Right ventricle myocardium inferior (tissue), 1 donor: ENCODE measurements at regions of chr9 and their contacts with region 1.

Region 1: GRCh38 chr9:93962561-93963440 is 7.6 kb upstream of the BARX1 start:
- DNase-seq: peak; percentile 85
- ATAC-seq: peak; percentile 83

Region 2: GRCh38 chr9:93713716-93714115 is 249.1 kb before region 1 on chr9:
- intact Hi-C with region 1: no loop called
- DNase-seq: no peak
- ATAC-seq: no peak

Region 3: DNA sequence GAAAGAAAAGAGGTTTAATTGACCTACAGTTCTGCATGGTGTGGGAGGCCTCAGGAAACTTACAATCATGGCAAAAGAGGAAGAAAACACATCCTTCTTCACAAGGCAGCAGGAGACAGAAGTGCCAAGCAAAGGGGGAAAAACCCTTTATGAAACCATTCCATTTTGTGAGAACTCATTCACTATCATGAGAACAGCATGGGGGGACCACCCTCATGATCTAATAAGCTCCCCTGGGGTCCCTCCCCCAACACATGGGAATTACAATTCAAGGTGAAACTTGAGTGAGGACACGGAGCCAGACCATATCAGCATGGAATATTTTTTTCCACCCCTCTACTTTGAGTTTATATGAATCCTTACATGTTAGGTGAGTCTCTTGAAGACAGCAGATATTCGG is 212.8 kb before region 1 on chr9:
- intact Hi-C with region 1: no loop called
- DNase-seq: no peak
- ATAC-seq: no peak

Region 4: DNA sequence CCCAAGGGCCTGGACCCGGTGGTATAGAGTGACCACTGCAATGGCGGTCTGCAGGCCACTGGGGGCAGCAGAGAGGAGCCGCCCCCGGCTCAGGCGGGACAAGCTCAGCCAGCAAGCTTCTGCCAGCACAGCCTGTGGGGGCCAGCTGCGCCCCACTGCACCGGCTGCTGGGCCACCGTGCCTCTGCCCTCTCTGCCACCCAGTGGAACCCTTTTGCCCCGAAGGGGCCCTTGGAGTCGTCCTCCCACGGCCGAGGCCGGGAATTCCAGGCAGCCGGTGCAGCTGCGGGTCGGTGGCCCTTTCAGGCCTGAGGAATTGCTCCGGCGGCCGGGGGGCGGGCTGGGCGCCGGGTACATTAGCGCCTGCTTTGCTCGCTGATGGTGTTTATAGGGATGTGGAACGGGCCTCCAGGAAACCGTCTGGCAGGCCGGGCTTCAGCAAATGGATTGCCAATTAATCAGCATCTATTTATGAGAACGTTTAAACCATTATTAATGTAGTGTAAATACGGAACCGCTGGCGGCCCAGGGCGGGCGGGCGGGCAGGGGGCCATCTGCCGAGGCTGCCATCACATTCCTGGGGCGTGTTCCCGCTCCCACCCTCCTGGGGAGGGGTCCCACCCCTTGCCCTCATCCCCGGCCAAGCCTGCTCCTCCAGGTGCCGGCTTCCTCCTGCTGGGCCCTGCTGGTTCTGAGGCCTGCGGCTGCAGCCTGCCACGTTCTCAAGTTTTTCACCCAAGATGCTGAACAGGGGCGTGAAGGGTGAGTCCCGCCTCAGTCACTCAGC is 135.1 kb before region 1 on chr9:
- intact Hi-C with region 1: loop called (anchors 5 kb)
- DNase-seq: peak; percentile 77
- ATAC-seq: peak; percentile 82